CD4-positive, alpha-beta memory T cell (primary cell): ENCODE measurements at regions of chr3 and their contacts with region 1.

Region 1: GRCh38 chr3:152268555-152269425 is at the start of gene MBNL1:
- DNase-seq: peak; percentile 83 to 93 (median 86)
- H3K4me3 ChIP-seq: peak within 1 kb of the TSS; percentile 87 to 90
- H3K4me3 Mint-ChIP-seq: peak within 1 kb of the TSS; percentile 90 to 100 (median 97)
- H3K27ac ChIP-seq: peak within 1 kb of the TSS; percentile 91
- H3K27ac Mint-ChIP-seq: peak within 1 kb of the TSS; percentile 80 to 100 (median 97)
- H3K4me1 ChIP-seq: peaks cover 61% of the 10 kb centered on the region
- H3K4me1 Mint-ChIP-seq: peaks cover 44 to 80% (median 57%) of the 10 kb centered on the region in 4 donors
- H3K27me3 ChIP-seq: no peaks in the 10 kb centered on the region
- H3K27me3 Mint-ChIP-seq: no peaks in the 10 kb centered on the region
- total RNA-seq, gene MBNL1: 420 to 430 TPM

Region 2: GRCh38 chr3:152071924-152072323 is 196.9 kb before region 1 on chr3:
- CTCF ChIA-PET with region 1: no interaction called
- POLR2A ChIA-PET with region 1: interaction called, 3 read pairs
- intact Hi-C with region 1: loop called (anchors 10 kb)
- DNase-seq: peak in 4 of 5 donors; percentile 22 to 45 (median 36)
- H3K4me3 ChIP-seq: no peak overlapping the region
- H3K4me3 Mint-ChIP-seq: no peak overlapping the region
- H3K27ac ChIP-seq: no peak overlapping the region
- H3K27ac Mint-ChIP-seq: no peak overlapping the region
- H3K4me1 ChIP-seq: no peaks in the 10 kb centered on the region
- H3K4me1 Mint-ChIP-seq: peaks cover 0 to 3% (median 1%) of the 10 kb centered on the region in 4 donors
- H3K27me3 ChIP-seq: no peaks in the 10 kb centered on the region
- H3K27me3 Mint-ChIP-seq: no peaks in the 10 kb centered on the region

Region 3: GRCh38 chr3:152205097-152205593 is 63.6 kb before region 1 on chr3:
- CTCF ChIA-PET with region 1: interaction called, 11 read pairs
- POLR2A ChIA-PET with region 1: interaction called, 267 read pairs
- intact Hi-C with region 1: no loop called
- DNase-seq: peak in 3 of 5 donors; percentile 41 to 53 (median 47)
- H3K4me3 ChIP-seq: peak overlapping the region; percentile 41 to 63
- H3K4me3 Mint-ChIP-seq: peak overlapping the region; percentile 91 to 100 (median 98)
- H3K27ac ChIP-seq: peak overlapping the region; percentile 75
- H3K27ac Mint-ChIP-seq: peak overlapping the region; percentile 91 to 98 (median 96)
- H3K4me1 ChIP-seq: peaks cover 77% of the 10 kb centered on the region
- H3K4me1 Mint-ChIP-seq: peaks cover 41 to 79% (median 56%) of the 10 kb centered on the region in 4 donors
- H3K27me3 ChIP-seq: no peaks in the 10 kb centered on the region
- H3K27me3 Mint-ChIP-seq: no peaks in the 10 kb centered on the region

Region 4: DNA sequence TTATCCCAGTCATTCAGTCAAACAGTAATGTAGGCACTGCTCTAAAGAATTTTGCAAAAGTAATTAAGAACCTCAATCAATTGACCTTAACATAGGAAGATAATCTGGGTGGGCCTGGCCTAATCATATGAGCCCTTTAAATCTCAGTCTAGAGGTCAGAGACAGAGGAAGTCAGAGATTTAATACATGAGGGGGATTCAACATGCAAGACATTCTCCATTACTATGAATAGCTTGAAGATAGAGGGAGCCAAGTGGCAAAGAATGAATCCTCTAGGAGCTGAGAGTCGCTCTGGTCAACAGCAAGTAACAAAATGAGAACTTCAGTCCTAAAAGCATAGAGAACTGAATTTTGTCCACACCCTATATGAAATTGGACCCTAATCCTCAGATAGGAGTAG is 39.1 kb before region 1 on chr3:
- CTCF ChIA-PET with region 1: interaction called, 3 read pairs
- POLR2A ChIA-PET with region 1: interaction called, 16 read pairs
- intact Hi-C with region 1: loop called (anchors 5 kb)
- DNase-seq: no peak
- H3K4me3 ChIP-seq: no peak overlapping the region
- H3K4me3 Mint-ChIP-seq: peak overlapping the region in 2 of 8 donors; percentile 1 to 13
- H3K27ac ChIP-seq: no peak overlapping the region
- H3K27ac Mint-ChIP-seq: peak overlapping the region in 1 of 7 donors; percentile 1
- H3K4me1 ChIP-seq: peaks cover 42% of the 10 kb centered on the region
- H3K4me1 Mint-ChIP-seq: peaks cover 34 to 56% (median 44%) of the 10 kb centered on the region in 4 donors
- H3K27me3 ChIP-seq: no peaks in the 10 kb centered on the region
- H3K27me3 Mint-ChIP-seq: no peaks in the 10 kb centered on the region

Region 5: GRCh38 chr3:152258448-152259393 is 10.1 kb before region 1 on chr3:
- CTCF ChIA-PET with region 1: interaction called, 25 read pairs
- POLR2A ChIA-PET with region 1: interaction called, 306 read pairs
- intact Hi-C with region 1: loop called (anchors 1 kb)
- DNase-seq: peak in 4 of 5 donors; percentile 56 to 94 (median 62)
- H3K4me3 ChIP-seq: peak overlapping the region in 1 of 2 donors; percentile 37
- H3K4me3 Mint-ChIP-seq: peak overlapping the region; percentile 74 to 92 (median 80)
- H3K27ac ChIP-seq: peak overlapping the region; percentile 75
- H3K27ac Mint-ChIP-seq: peak overlapping the region; percentile 91 to 96 (median 94)
- H3K4me1 ChIP-seq: peaks cover 96% of the 10 kb centered on the region
- H3K4me1 Mint-ChIP-seq: peaks cover 78 to 92% (median 85%) of the 10 kb centered on the region in 4 donors
- H3K27me3 ChIP-seq: no peaks in the 10 kb centered on the region
- H3K27me3 Mint-ChIP-seq: no peaks in the 10 kb centered on the region

Region 6: DNA sequence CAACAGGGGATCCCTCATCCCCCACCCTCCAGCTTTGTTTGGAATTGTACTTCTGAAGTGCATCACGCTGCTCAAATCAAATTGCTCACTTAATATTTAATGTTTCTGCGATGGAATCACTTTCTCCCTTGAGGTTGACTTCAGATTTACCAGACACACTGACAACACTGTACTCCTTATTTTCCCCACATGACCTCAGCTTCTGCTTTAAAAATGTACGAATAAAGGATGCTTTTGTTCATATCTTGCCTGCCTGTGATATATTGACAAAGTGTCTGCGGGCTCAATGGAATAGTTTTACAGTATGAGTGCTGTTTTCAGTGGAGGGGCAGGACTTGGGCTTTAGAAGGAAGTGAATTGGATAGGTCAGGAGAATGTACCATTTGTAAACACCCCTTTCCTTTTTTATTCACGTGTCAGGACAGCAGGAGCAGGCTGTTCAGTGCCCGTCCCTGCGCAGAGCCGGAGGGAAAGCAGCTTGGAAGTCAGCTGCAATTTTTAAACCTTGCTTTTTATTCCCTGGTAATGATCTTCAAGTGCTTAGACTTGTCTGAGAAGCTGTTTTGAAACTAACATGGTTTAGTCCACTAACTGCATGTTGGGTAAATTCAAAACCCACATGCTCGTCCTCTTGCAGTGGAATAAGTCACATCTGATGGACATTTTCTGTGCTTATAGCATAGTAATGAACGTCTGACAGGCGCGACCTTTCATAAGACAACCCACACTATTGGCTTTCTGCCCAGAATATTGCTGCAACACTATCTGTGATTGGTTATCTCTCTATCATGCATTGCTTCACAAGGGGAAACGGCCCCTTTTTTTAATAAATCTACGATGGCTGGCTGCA is 29.8 kb after region 1 on chr3:
- CTCF ChIA-PET with region 1: no interaction called
- POLR2A ChIA-PET with region 1: interaction called, 32 read pairs
- intact Hi-C with region 1: no loop called
- DNase-seq: peak; percentile 81 to 84 (median 82)
- H3K4me3 ChIP-seq: peak overlapping the region; percentile 23 to 29
- H3K4me3 Mint-ChIP-seq: peak overlapping the region; percentile 64 to 87 (median 78)
- H3K27ac ChIP-seq: peak overlapping the region; percentile 54
- H3K27ac Mint-ChIP-seq: peak overlapping the region; percentile 88 to 97 (median 92)
- H3K4me1 ChIP-seq: peaks cover 98% of the 10 kb centered on the region
- H3K4me1 Mint-ChIP-seq: peaks cover 62 to 82% (median 72%) of the 10 kb centered on the region in 4 donors
- H3K27me3 ChIP-seq: no peaks in the 10 kb centered on the region
- H3K27me3 Mint-ChIP-seq: no peaks in the 10 kb centered on the region

Region 7: DNA sequence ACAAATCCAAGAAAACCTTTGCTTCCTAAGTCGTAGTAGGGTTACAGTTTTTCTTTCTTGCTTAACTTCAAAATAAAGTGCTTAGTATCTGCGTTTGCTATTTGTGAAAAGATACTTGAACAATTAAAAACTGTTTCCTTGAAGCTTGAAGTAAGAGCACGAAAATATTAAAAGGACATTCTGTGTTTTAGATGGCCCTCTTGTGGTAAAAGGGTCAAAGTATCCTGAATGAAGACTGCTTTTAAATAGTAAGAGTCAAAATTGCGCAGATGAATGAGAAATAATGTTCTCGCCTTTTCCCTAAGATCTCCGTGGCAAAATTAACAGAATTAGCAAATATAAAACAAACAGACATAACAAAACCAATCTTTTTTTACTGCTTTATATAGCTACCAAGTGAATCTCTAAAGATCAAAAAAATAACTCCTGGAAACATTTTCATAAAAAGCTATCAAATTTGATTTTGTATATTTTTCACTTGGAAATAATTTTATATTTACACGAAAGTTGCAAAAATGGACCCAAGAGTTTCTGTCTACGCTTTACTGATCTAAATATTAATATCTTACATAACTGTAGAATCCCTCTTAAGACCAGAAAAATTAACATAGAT is 175.3 kb after region 1 on chr3:
- CTCF ChIA-PET with region 1: interaction called, 5 read pairs
- POLR2A ChIA-PET with region 1: interaction called, 4 read pairs
- intact Hi-C with region 1: loop called (anchors 2 kb)
- DNase-seq: peak in 4 of 5 donors; percentile 33 to 43 (median 38)
- H3K4me3 ChIP-seq: no peak overlapping the region
- H3K4me3 Mint-ChIP-seq: peak overlapping the region in 4 of 8 donors; percentile 1 to 47 (median 12)
- H3K27ac ChIP-seq: peak overlapping the region; percentile 6
- H3K27ac Mint-ChIP-seq: peak overlapping the region in 6 of 7 donors; percentile 17 to 92 (median 56)
- H3K4me1 ChIP-seq: peaks cover 89% of the 10 kb centered on the region
- H3K4me1 Mint-ChIP-seq: peaks cover 49 to 77% (median 60%) of the 10 kb centered on the region in 4 donors
- H3K27me3 ChIP-seq: no peaks in the 10 kb centered on the region
- H3K27me3 Mint-ChIP-seq: no peaks in the 10 kb centered on the region